Esophagus muscularis mucosa (tissue), 4 donors: ENCODE measurements at regions of chr5 and their contacts with region 1.

Region 1: DNA sequence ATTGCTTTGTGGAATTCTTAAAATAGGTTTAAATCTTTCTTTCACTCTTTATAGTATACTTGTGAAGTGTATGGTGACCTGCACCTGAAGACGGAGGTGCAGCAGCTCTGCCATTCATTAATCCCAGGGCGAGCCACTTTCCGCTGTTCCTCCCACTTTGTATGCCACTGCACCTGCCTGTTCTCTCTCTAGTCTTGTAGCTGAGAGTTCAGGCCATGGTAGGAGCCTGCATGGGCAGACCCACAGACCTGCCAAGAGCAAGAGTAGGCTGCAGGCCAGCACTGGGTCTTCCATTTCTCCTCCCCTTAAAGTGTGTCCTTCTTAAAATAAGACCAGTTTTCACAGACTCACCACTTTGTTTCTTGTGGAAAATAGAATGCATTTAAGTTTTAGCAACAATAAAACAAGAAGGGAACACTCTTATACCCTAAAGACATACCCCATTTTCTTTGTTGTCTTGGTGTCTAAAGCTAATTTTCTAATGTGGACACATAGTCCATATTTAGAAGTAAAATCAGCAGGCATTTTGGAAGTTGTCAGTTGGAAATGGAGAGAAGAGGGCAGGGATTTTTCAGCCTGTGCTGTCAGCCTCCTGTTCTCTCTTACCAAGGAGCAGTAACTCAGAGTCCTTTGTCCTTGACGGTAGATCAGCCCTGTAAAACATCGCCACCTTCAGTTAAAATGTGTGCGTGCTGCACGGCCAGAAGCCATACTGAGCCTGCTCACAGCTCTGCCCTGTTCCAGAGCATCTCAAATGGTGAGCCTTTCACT is 103.2 kb downstream of the SNCAIP start:
- DNase-seq: no peak
- H3K4me3 ChIP-seq: no peak overlapping the region
- H3K27ac ChIP-seq: no peak overlapping the region
- H3K4me1 ChIP-seq: peaks cover 0 to 5% (median 0%) of the 10 kb centered on the region in 4 donors
- H3K27me3 ChIP-seq: no peaks in the 10 kb centered on the region
- CTCF ChIP-seq: peak; percentile 68 to 82 (median 69)
- EP300 ChIP-seq: no peak
- POLR2A ChIP-seq: no peak

Region 2: GRCh38 chr5:122091936-122092600 is 323.1 kb before region 1 on chr5:
- intact Hi-C with region 1: loop called (anchors 10 kb)
- DNase-seq: no peak
- H3K4me3 ChIP-seq: no peak overlapping the region
- H3K27ac ChIP-seq: no peak overlapping the region
- H3K4me1 ChIP-seq: peaks cover 0 to 28% (median 7%) of the 10 kb centered on the region in 4 donors
- H3K27me3 ChIP-seq: no peaks in the 10 kb centered on the region
- CTCF ChIP-seq: peak; percentile 45 to 60 (median 52)
- EP300 ChIP-seq: no peak
- POLR2A ChIP-seq: no peak

Region 3: DNA sequence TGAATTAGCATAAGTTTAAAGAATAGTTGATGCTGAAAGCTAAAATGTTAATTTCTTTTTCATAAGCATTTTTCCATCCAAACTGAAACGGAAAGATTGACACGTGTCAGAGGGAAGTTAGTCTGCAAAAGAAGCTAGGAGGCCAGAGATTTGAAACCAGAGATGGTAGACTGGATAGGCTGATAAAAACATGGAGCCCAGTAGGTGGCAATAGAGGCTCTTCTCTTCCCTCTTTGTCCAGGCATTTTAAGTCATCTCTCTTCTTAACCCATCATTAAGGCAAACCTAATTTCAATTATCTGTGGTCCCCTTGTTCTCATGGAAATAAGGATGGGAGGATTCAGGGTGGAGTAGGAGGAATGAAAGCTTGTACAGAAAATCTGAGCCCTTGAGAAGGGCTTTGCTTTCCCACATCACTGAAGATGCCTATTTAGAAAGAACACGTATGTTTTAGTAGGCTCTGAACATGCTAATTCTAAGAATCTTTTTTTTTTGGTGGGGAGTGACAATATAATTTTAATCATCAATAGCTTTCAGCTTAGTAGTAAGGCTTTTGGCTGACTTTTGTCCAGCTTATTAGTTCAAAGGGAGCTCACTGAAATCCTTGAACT is 219.3 kb before region 1 on chr5:
- intact Hi-C with region 1: loop called (anchors 1 kb)
- DNase-seq: no peak
- H3K4me3 ChIP-seq: no peak overlapping the region
- H3K27ac ChIP-seq: no peak overlapping the region
- H3K4me1 ChIP-seq: peaks cover 0 to 4% (median 0%) of the 10 kb centered on the region in 4 donors
- H3K27me3 ChIP-seq: no peaks in the 10 kb centered on the region
- CTCF ChIP-seq: peak; percentile 48 to 62 (median 54)
- EP300 ChIP-seq: no peak
- POLR2A ChIP-seq: no peak